SK-N-SH (cell line): ENCODE measurements at regions of chr17 and their contacts with region 1.

Region 1: GRCh38 chr17:79188048-79188447 is 113.4 kb downstream of the ENGASE start:
- DNase-seq: peak; percentile 97
- H3K4me3 ChIP-seq: no peak overlapping the region
- H3K27ac ChIP-seq: no peak overlapping the region
- H3K4me1 ChIP-seq: peaks cover 0 to 3% of the 10 kb centered on the region in 2 experiments; a peak in 1 of 4 replicates
- H3K27me3 ChIP-seq: peaks cover 44% of the 10 kb centered on the region
- CTCF ChIP-seq: peak; percentile 63
- EP300 ChIP-seq: no peak
- RAD21 ChIP-seq: peak; percentile 92

Region 2: GRCh38 chr17:79109570-79109969 is 78.5 kb before region 1 on chr17:
- CTCF ChIA-PET with region 1: interaction called, 13 read pairs
- POLR2A ChIA-PET with region 1: no interaction called
- DNase-seq: peak; percentile 79
- H3K4me3 ChIP-seq: no peak overlapping the region
- H3K27ac ChIP-seq: no peak overlapping the region
- H3K4me1 ChIP-seq: peaks cover 0 to 15% of the 10 kb centered on the region in 2 experiments; a peak in 1 of 4 replicates
- H3K27me3 ChIP-seq: peaks cover 17% of the 10 kb centered on the region; the same call in 1 of the 2 replicates
- CTCF ChIP-seq: peak; percentile 48
- EP300 ChIP-seq: no peak
- RAD21 ChIP-seq: peak; percentile 51

Region 3: DNA sequence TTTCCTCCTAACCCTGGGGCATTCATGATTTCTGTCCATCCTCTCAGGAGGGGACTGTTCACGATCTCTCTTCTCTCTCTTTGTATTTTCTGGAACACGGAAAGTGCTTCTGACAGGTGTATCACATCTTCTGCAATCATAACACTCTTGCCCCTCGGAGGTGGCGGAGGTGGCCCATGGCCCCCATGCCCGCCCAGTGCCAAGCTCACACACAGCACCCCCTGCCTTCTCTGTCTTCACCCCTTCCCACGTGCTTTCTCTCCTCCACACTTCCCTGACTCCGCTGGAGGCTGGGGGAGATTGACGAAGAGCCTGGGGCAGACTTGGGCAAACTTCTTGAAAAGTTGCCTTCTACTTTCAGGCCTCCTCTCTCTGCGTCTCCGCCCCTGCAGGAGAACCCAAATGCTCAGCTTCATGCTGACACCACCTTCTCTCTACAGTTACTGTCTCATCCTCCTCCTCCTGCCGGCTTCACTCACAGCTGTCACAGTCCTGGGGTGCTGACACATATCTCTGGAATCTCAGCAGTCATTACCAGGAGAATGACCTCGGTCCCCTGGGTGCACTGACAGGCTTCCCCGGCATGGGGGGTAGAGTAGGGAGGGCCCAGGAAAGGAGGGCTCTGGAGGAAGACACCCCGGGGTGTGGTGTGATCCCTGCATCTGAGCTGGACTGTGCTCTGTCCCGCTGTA is 13.6 kb after region 1 on chr17:
- CTCF ChIA-PET with region 1: interaction called, 157 read pairs
- POLR2A ChIA-PET with region 1: no interaction called
- DNase-seq: no peak
- H3K4me3 ChIP-seq: no peak overlapping the region
- H3K27ac ChIP-seq: no peak overlapping the region
- H3K4me1 ChIP-seq: peaks cover 0 to 12% of the 10 kb centered on the region in 2 experiments; a peak in 1 of 4 replicates
- H3K27me3 ChIP-seq: peaks cover 38% of the 10 kb centered on the region
- CTCF ChIP-seq: no peak
- EP300 ChIP-seq: no peak
- RAD21 ChIP-seq: no peak

Region 4: GRCh38 chr17:79272666-79273219 is 84.7 kb after region 1 on chr17:
- CTCF ChIA-PET with region 1: interaction called, 51 read pairs
- POLR2A ChIA-PET with region 1: no interaction called
- DNase-seq: peak; percentile 85
- H3K4me3 ChIP-seq: no peak overlapping the region
- H3K27ac ChIP-seq: peak overlapping the region in 1 of 2 experiments; percentile 76; a peak in 2 of 4 replicates
- H3K4me1 ChIP-seq: peaks cover 0 to 47% of the 10 kb centered on the region in 2 experiments; a peak in 1 of 4 replicates
- H3K27me3 ChIP-seq: 0 out of 2 replicates have a peak, but pooled peaks cover 9% of the 10 kb centered on the region
- CTCF ChIP-seq: no peak
- EP300 ChIP-seq: no peak
- RAD21 ChIP-seq: no peak; the same call in 1 of the 2 replicates

Region 5: DNA sequence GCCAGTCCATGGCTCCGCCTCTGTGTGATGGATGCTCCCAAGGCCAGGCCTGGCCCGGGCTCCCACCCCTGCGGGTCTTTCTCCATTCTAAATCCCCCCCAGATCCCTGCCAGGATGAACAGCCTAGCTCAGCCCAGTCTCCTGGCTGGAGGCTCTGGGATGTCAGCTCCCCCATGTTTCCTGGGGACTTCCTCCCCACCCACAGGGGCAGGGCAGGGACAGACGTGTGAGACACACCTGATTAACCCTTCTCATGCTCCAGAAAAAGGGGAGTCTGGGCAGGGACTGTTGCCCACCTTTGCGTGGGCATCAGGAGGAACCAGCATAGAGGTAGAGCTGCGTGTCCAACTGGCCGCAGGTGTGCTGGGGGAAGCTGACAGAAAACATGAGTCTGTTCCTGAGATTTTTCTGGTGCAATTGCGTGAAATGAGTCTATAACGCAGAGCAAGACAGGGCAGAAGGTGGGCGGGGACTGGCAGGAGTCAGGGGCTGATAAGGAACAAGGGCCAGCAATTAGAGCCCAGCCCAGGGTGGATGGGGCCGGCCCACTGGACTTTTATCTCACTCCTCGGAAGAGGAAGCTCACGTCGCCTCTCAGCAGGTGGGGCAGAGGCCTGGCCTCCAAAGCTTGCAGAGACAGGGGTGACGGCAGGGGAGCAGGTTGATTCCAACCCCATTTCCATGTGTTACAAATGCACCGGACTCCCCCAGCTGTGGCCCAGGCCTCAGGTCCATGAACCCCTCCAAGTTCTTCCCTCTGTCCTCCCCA is 184.6 kb after region 1 on chr17:
- CTCF ChIA-PET with region 1: interaction called, 22 read pairs
- POLR2A ChIA-PET with region 1: no interaction called
- DNase-seq: no peak
- H3K4me3 ChIP-seq: no peak overlapping the region
- H3K27ac ChIP-seq: no peak overlapping the region
- H3K4me1 ChIP-seq: no peaks in the 10 kb centered on the region
- H3K27me3 ChIP-seq: peaks cover 25% of the 10 kb centered on the region; the same call in 1 of the 2 replicates
- CTCF ChIP-seq: no peak
- EP300 ChIP-seq: no peak
- RAD21 ChIP-seq: no peak

Region 6: GRCh38 chr17:79630821-79631639 is 443.0 kb after region 1 on chr17:
- CTCF ChIA-PET with region 1: no interaction called
- POLR2A ChIA-PET with region 1: no interaction called
- DNase-seq: peak; percentile 22
- H3K4me3 ChIP-seq: no peak overlapping the region
- H3K27ac ChIP-seq: no peak overlapping the region
- H3K4me1 ChIP-seq: no peaks in the 10 kb centered on the region; a peak in 1 of 4 replicates
- H3K27me3 ChIP-seq: peaks cover 25% of the 10 kb centered on the region
- CTCF ChIP-seq: no peak
- EP300 ChIP-seq: no peak
- RAD21 ChIP-seq: no peak